ENCODE measurements at regions of chr10 and their contacts with region 1.

Region 1: DNA sequence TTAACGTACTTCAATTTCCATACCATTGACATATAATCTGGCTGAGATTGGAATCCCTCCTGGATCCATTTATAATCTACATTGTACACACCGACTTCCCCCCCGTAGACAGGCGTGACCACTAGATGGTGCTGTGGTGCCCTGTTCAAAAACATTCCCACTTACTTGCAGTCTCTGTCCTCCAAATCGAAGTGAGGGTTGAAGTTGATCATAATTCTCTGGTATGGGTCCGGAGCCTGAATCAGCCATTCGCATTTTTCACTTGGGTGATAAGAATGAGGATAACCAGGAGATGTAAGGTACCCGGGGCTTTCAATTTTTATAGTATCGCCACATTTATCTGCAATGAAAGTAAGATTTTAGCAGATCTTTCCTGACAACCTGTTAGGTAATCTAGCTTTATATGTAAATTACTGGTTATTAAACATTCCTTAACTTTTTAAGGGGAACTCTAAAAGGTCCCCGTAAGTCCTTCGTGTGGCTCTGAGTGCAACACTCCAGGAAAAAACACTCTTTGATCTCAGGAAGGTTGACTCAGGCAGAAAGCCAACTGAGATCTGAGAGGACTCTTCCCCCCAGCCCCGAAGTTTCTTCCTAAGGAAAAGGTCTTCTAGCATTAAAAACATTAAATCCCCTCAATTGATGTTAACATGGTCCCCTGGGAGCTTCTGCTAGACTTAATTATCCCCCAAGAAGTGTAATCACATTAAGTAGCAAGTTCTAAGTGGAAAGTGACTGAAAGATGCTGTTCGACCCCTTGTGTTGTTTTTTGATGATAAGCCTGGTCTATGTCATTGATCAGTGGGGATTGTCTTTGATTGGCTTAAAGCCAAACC is 3.7 kb downstream of the NRP1 start:
- DNase-seq: peak; percentile 84 to 94
- H3K4me3 ChIP-seq: peak overlapping the region; percentile 64
- H3K4me1 ChIP-seq: peaks cover 32% of the 10 kb centered on the region
- H3K27me3 ChIP-seq: no peaks in the 10 kb centered on the region

Region 2: DNA sequence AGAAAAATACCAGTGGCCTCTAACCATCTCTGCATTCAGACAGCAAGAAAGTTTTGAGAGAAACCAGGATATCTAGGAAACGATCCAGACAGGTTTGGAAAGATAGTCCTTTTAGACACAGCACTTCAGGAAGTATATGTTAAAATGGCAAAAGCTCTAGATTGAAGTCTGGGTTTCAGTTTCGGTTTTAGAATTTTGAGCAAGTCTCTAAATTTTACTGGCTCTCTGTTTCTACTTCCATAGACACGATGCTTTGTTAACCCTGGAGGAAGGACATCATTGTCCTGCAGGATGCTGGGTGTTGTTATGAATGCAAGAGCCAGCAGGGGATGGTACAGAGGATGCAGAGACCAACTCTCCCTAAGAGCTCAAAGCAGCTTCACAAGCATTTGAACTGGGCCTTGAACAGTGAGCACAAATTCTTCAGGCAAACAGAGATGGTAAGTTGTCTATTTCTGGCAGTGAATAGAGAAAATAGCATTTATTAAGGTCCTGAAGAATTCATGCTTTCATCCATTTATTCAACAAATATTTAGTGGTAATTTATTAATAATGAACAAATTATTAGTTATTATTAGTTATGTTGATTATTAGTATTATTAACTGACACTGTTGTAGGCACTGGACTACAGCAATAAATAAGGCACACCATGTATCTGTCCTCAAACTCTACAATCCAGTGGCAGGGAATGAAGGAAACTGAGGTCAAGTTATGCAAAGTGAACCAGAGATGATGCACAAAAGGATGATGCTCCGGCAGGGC is 156.4 kb after region 1 on chr10:
- in situ Hi-C with region 1: loop called (anchors 10 kb)
- DNase-seq: no peak
- H3K4me3 ChIP-seq: no peak overlapping the region
- H3K4me1 ChIP-seq: peaks cover 31% of the 10 kb centered on the region
- H3K27me3 ChIP-seq: no peaks in the 10 kb centered on the region

Region 3: GRCh38 chr10:34181553-34182300 is 851.0 kb after region 1 on chr10:
- in situ Hi-C with region 1: loop called (anchors 25 kb)
- DNase-seq: no peak
- H3K4me3 ChIP-seq: no peak overlapping the region
- H3K4me1 ChIP-seq: peaks cover 30% of the 10 kb centered on the region
- H3K27me3 ChIP-seq: peaks cover 37% of the 10 kb centered on the region

Region 4: GRCh38 chr10:34374356-34375045 is 1043.7 kb after region 1 on chr10:
- in situ Hi-C with region 1: loop called (anchors 25 kb)
- DNase-seq: no peak
- H3K4me3 ChIP-seq: no peak overlapping the region
- H3K4me1 ChIP-seq: peaks cover 19% of the 10 kb centered on the region
- H3K27me3 ChIP-seq: no peaks in the 10 kb centered on the region

Region 5: GRCh38 chr10:34637418-34637911 is 1306.7 kb after region 1 on chr10:
- in situ Hi-C with region 1: loop called (anchors 25 kb)
- DNase-seq: peak; percentile 42 to 84
- H3K4me3 ChIP-seq: no peak overlapping the region
- H3K4me1 ChIP-seq: peaks cover 9% of the 10 kb centered on the region
- H3K27me3 ChIP-seq: no peaks in the 10 kb centered on the region